Astrocyte of the cerebellum (primary cell): ENCODE measurements at regions of chr2 and their contacts with region 1.

Region 1: GRCh38 chr2:106956879-106957278 is 70.9 kb upstream of the ST6GAL2 start:
- DNase-seq: peak; percentile 96
- H3K4me3 ChIP-seq: no peak overlapping the region
- CTCF ChIP-seq: no peak

Region 2: DNA sequence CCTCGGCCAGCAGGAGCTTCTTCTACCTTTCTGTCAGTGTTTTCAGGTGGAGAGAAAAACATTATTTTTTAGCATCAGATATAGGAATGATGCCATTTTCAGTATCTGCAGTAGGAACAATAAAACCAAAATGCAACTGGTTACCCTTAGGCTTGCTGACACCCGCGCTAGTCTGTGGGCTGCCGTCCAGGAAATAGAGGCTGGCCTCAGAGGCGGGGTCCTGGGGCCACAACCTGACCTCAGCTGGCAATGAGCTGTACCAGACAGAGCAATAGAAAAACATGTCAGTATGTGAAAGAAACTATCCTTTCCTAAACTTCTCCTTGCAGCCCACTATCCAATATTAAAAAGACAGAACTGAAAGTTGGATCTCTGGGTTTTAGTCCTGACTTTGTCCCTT is 66.3 kb before region 1 on chr2:
- in situ Hi-C with region 1: loop called (anchors 5 kb)
- DNase-seq: no peak
- H3K4me3 ChIP-seq: no peak overlapping the region
- CTCF ChIP-seq: no peak

Region 3: DNA sequence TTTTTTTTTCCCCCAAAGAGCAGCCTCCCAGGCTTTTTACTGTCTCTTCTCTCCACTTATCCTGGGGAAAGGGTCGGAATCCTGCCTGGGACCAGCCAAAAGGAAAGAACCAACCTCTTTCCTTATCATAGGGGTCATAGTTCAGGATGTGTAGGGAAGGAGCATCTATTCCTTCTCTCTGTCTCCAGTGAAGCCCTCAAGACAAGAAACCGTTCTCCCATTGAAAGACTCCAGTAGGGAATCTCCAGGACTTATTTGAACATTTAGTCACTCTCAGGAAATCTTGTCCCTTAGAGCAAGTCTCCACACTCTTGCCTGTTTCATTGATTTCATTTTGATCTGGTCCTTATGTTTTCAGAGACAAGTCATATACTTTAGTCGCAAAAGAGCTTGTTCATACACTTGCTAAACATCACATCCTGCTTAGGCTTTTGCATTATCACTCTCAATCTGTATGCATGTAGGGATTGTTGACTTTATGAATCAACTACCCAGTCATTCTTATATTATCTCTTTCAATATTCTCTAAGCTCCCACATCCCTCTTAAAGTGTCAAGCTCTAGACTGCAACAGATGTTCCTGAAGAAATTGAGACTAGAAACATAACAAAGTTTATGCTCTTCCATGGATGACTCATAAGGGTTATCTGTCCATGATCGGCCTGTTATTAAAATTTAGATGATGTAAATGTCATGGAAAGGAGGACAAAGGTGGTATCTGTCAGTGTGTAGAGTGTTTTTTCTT is 45.3 kb after region 1 on chr2:
- in situ Hi-C with region 1: loop called (anchors 5 kb)
- DNase-seq: no peak
- H3K4me3 ChIP-seq: no peak overlapping the region
- CTCF ChIP-seq: no peak